Mammary epithelial cell (primary cell): ENCODE measurements at regions of chr17 and their contacts with region 1.

Region 1: GRCh38 chr17:42677921-42678781 is 1.4 kb upstream of the PLEKHH3 start:
- DNase-seq: peak; percentile 83
- H3K4me3 ChIP-seq: peak overlapping the region; percentile 52 to 67 (median 56)
- H3K27ac ChIP-seq: peak overlapping the region; percentile 73
- H3K4me1 ChIP-seq: peaks cover 62% of the 10 kb centered on the region
- H3K27me3 ChIP-seq: no peaks in the 10 kb centered on the region
- CTCF ChIP-seq: no peak

Region 2: DNA sequence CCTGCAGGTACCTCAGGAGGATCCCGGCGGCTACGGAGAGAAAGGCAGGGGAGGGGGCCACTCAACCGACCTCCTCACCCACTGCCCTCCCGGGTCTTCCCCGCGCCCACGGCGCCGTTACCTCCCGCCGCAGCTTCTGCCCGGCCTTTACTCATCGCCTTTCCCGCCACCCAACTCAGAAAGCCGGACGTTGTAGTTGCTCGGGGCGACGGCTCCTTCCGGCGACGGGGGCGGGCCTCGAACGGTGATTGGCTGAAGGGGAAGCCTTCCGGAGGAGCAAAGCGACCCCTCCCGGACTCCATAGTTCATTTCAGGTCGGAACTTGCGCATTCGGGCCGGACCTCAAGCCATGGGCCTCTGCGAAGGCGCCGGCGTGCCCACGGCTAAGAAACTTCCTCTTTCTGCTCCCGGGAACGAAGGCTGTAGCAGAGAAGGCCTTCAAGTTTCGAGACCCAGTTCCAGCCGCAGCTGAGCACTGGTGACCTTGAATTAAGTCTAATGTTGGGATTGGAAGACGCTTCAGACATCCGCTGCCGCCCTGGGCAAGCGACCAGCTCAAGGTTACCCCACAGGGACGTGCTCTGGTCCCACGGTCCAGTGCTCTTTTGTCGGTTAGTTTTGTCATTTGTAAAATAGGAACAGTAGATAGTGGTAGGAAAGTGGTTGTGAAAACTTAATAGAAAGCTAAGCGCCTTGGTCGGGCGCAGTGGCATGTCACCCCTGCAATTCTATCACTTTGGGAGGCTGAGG is 100.4 kb before region 1 on chr17 and contains the start of gene PSMC3IP:
- CTCF ChIA-PET with region 1: interaction called, 4 read pairs
- dilution Hi-C with region 1: no loop called
- in situ Hi-C with region 1: no loop called
- intact Hi-C with region 1: loop called (anchors 1 kb)
- DNase-seq: peak; percentile 94
- H3K4me3 ChIP-seq: peak within 1 kb of the TSS; percentile 67 to 78 (median 73)
- H3K27ac ChIP-seq: peak within 1 kb of the TSS; percentile 58
- H3K4me1 ChIP-seq: peaks cover 16% of the 10 kb centered on the region
- H3K27me3 ChIP-seq: no peaks in the 10 kb centered on the region
- CTCF ChIP-seq: peak; percentile 9 to 54
- total RNA-seq, gene PSMC3IP: 2.2 to 25.2 TPM

Region 3: GRCh38 chr17:42609182-42609813 is 68.9 kb before region 1 on chr17 and contains the starts of genes RETREG3 and TUBG1:
- CTCF ChIA-PET with region 1: interaction called, 3 read pairs
- dilution Hi-C with region 1: no loop called
- in situ Hi-C with region 1: no loop called
- intact Hi-C with region 1: loop called (anchors 1 kb)
- DNase-seq: peak; percentile 100
- H3K4me3 ChIP-seq: peak within 1 kb of the TSS; percentile 68 to 91 (median 79)
- H3K27ac ChIP-seq: peak within 1 kb of the TSS; percentile 59
- H3K4me1 ChIP-seq: peaks cover 10% of the 10 kb centered on the region
- H3K27me3 ChIP-seq: no peaks in the 10 kb centered on the region
- CTCF ChIP-seq: peak; percentile 17 to 56
- total RNA-seq, gene RETREG3: 60.4 to 97.7 TPM
- total RNA-seq, gene TUBG1: 43.0 to 133 TPM

Region 4: DNA sequence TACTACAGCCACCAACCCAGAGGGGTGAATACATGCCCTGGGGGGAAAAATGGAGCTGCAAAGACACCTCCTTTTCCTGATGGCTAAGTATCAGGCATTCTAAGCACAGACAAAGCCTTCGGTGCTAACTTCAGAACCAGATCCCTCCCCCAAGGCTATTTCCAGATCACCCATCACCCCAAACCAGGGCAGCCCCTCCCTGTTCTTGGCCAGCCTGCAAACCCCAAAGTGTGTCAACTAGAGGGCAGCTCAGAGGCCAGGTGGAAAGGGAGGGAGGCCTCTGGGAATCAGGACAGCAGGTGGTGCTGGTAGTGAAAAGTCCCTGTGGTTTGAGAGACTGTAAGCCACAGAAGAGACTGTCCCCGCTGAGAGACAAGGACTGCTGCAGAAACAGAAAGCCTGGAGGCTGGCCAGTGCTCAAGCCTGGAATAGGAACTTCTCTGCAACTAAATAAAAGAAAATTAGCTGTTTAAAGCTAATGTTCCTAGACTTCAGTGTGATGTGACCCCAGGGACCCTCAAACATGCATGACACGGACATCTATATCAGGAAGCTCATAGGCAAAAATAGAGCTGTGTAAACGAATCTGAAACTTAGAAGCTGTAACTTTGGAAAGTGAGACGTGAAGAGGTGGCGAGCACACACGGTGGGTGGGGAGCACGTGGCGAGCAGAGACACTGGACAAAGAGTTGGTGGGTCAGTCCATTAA is 59.6 kb before region 1 on chr17:
- CTCF ChIA-PET with region 1: no interaction called
- dilution Hi-C with region 1: no loop called
- in situ Hi-C with region 1: no loop called
- intact Hi-C with region 1: loop called (anchors 1 kb)
- DNase-seq: peak; percentile 73
- H3K4me3 ChIP-seq: no peak overlapping the region
- H3K27ac ChIP-seq: no peak overlapping the region
- H3K4me1 ChIP-seq: peaks cover 15% of the 10 kb centered on the region
- H3K27me3 ChIP-seq: no peaks in the 10 kb centered on the region
- CTCF ChIP-seq: peak in 1 of 2 donors; percentile 65

Region 5: GRCh38 chr17:42667123-42667951 is 10.8 kb before region 1 on chr17:
- CTCF ChIA-PET with region 1: no interaction called
- dilution Hi-C with region 1: no loop called
- in situ Hi-C with region 1: no loop called
- intact Hi-C with region 1: loop called (anchors 1 kb)
- DNase-seq: peak; percentile 94
- H3K4me3 ChIP-seq: no peak overlapping the region
- H3K27ac ChIP-seq: peak overlapping the region; percentile 32
- H3K4me1 ChIP-seq: peaks cover 40% of the 10 kb centered on the region
- H3K27me3 ChIP-seq: no peaks in the 10 kb centered on the region
- CTCF ChIP-seq: no peak

Region 6: DNA sequence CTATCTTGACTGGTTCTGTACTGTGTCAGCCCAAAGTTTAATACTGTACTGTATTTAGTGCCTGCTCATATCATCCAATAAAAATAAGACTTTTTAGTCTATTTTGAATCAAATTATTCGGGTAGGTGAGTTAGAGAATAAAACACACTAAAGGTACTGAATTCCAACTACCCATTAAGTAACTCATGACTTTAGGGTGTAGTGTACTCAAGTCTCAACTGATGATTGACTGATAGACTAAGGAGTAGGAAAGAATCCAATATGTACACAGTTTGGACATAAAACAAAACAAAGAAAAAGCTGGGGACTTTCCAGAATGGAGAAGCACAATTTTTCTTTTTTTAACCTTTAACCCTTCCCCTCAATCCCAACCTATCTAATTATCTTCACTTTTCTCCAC is 62.5 kb after region 1 on chr17:
- CTCF ChIA-PET with region 1: no interaction called
- dilution Hi-C with region 1: no loop called
- in situ Hi-C with region 1: no loop called
- intact Hi-C with region 1: no loop called
- DNase-seq: no peak
- H3K4me3 ChIP-seq: no peak overlapping the region
- H3K27ac ChIP-seq: no peak overlapping the region
- H3K4me1 ChIP-seq: peaks cover 13% of the 10 kb centered on the region
- H3K27me3 ChIP-seq: no peaks in the 10 kb centered on the region
- CTCF ChIP-seq: no peak